ENCODE measurements at regions of chr1 and their contacts with region 1.

Region 1: GRCh38 chr1:31065310-31066217 is at the start of gene PUM1:
- DNase-seq: peak; percentile 95 to 99 (median 97)
- ATAC-seq: peak; percentile 99
- H3K4me3 ChIP-seq: peak within 1 kb of the TSS; percentile 97
- H3K4me3 Mint-ChIP-seq: peak within 1 kb of the TSS; percentile 96 to 100 (median 98)
- H3K27ac ChIP-seq: peak within 1 kb of the TSS; percentile 95
- H3K27ac Mint-ChIP-seq: peak within 1 kb of the TSS; percentile 97 to 99 (median 98)
- H3K4me1 ChIP-seq: peaks cover 10 to 18% of the 10 kb centered on the region in 2 donors
- H3K4me1 Mint-ChIP-seq: peaks cover 20 to 38% (median 29%) of the 10 kb centered on the region in 7 donors
- H3K27me3 ChIP-seq: no peaks in the 10 kb centered on the region
- H3K27me3 Mint-ChIP-seq: no peaks in the 10 kb centered on the region
- total RNA-seq, gene PUM1: 114 to 226 (median 174) TPM

Region 2: GRCh38 chr1:30743584-30744059 is 321.9 kb before region 1 on chr1:
- CTCF ChIA-PET with region 1: no interaction called
- POLR2A ChIA-PET with region 1: no interaction called
- intact Hi-C with region 1: loop called in 1 of 2 experiments (anchors 10 kb)
- DNase-seq: peak in 8 of 9 donors; percentile 58 to 90 (median 82)
- ATAC-seq: peak; percentile 83
- H3K4me3 ChIP-seq: peak overlapping the region; percentile 45
- H3K4me3 Mint-ChIP-seq: peak overlapping the region; percentile 82 to 98 (median 91)
- H3K27ac ChIP-seq: peak overlapping the region; percentile 98
- H3K27ac Mint-ChIP-seq: peak overlapping the region; percentile 90 to 100 (median 97)
- H3K4me1 ChIP-seq: peaks cover 84 to 86% of the 10 kb centered on the region in 2 donors
- H3K4me1 Mint-ChIP-seq: peaks cover 75 to 100% (median 97%) of the 10 kb centered on the region in 7 donors
- H3K27me3 ChIP-seq: no peaks in the 10 kb centered on the region
- H3K27me3 Mint-ChIP-seq: no peaks in the 10 kb centered on the region

Region 3: GRCh38 chr1:30977105-30977504 is 88.5 kb before region 1 on chr1:
- CTCF ChIA-PET with region 1: no interaction called
- POLR2A ChIA-PET with region 1: no interaction called
- intact Hi-C with region 1: loop called in 1 of 2 experiments (anchors 10 kb)
- DNase-seq: no peak
- ATAC-seq: no peak
- H3K4me3 ChIP-seq: no peak overlapping the region
- H3K4me3 Mint-ChIP-seq: peak overlapping the region in 4 of 10 donors; percentile 4 to 38 (median 16)
- H3K27ac ChIP-seq: no peak overlapping the region
- H3K27ac Mint-ChIP-seq: peak overlapping the region in 8 of 9 donors; percentile 5 to 83 (median 68)
- H3K4me1 ChIP-seq: no peaks in the 10 kb centered on the region
- H3K4me1 Mint-ChIP-seq: peaks cover 17 to 63% (median 46%) of the 10 kb centered on the region in 7 donors
- H3K27me3 ChIP-seq: no peaks in the 10 kb centered on the region
- H3K27me3 Mint-ChIP-seq: no peaks in the 10 kb centered on the region

Region 4: GRCh38 chr1:31155216-31155841 is 89.8 kb after region 1 on chr1:
- CTCF ChIA-PET with region 1: no interaction called
- POLR2A ChIA-PET with region 1: interaction called, 3 read pairs
- intact Hi-C with region 1: loop called (anchors 1 to 2 kb)
- DNase-seq: peak; percentile 20 to 82 (median 37)
- ATAC-seq: peak; percentile 81
- H3K4me3 ChIP-seq: peak overlapping the region; percentile 70
- H3K4me3 Mint-ChIP-seq: peak overlapping the region; percentile 84 to 94 (median 90)
- H3K27ac ChIP-seq: peak overlapping the region; percentile 65
- H3K27ac Mint-ChIP-seq: peak overlapping the region; percentile 41 to 86 (median 77)
- H3K4me1 ChIP-seq: peaks cover 5 to 11% of the 10 kb centered on the region in 2 donors
- H3K4me1 Mint-ChIP-seq: peaks cover 4 to 11% (median 10%) of the 10 kb centered on the region in 7 donors
- H3K27me3 ChIP-seq: no peaks in the 10 kb centered on the region
- H3K27me3 Mint-ChIP-seq: no peaks in the 10 kb centered on the region

Region 5: GRCh38 chr1:31644560-31645273 is 579.2 kb after region 1 on chr1 and contains the start of gene PEF1:
- CTCF ChIA-PET with region 1: no interaction called
- POLR2A ChIA-PET with region 1: no interaction called
- intact Hi-C with region 1: loop called (anchors 10 kb)
- DNase-seq: peak; percentile 97 to 100 (median 99)
- ATAC-seq: peak; percentile 94
- H3K4me3 ChIP-seq: peak within 1 kb of the TSS; percentile 91
- H3K4me3 Mint-ChIP-seq: peak within 1 kb of the TSS; percentile 92 to 100 (median 98)
- H3K27ac ChIP-seq: peak within 1 kb of the TSS; percentile 98
- H3K27ac Mint-ChIP-seq: peak within 1 kb of the TSS; percentile 98 to 100 (median 99)
- H3K4me1 ChIP-seq: peaks cover 27 to 30% of the 10 kb centered on the region in 2 donors
- H3K4me1 Mint-ChIP-seq: peaks cover 18 to 47% (median 40%) of the 10 kb centered on the region in 7 donors
- H3K27me3 ChIP-seq: no peaks in the 10 kb centered on the region
- H3K27me3 Mint-ChIP-seq: no peaks in the 10 kb centered on the region
- total RNA-seq, gene PEF1: 37.7 to 49.8 (median 40.8) TPM